ENCODE measurements at regions of chr4 and their contacts with region 1.

Region 1: GRCh38 chr4:158496030-158496741 is 25.5 kb upstream of the RXFP1 start:
- DNase-seq: peak in 1 of 2 donors; percentile 7
- ATAC-seq: no peak
- H3K4me3 ChIP-seq: no peak overlapping the region
- H3K27ac ChIP-seq: no peak overlapping the region
- H3K4me1 ChIP-seq: no peaks in the 10 kb centered on the region
- H3K27me3 ChIP-seq: no peaks in the 10 kb centered on the region
- CTCF ChIP-seq: peak; percentile 41

Region 2: GRCh38 chr4:158282252-158282651 is 213.9 kb before region 1 on chr4:
- intact Hi-C with region 1: no loop called
- DNase-seq: no peak
- ATAC-seq: no peak
- H3K4me3 ChIP-seq: no peak overlapping the region
- H3K27ac ChIP-seq: no peak overlapping the region
- H3K4me1 ChIP-seq: no peaks in the 10 kb centered on the region
- H3K27me3 ChIP-seq: no peaks in the 10 kb centered on the region
- CTCF ChIP-seq: no peak

Region 3: GRCh38 chr4:158624889-158625478 is 128.8 kb after region 1 on chr4:
- intact Hi-C with region 1: loop called in 1 of 2 experiments (anchors 10 kb)
- DNase-seq: no peak
- ATAC-seq: peak; percentile 81 to 93 (median 84)
- H3K4me3 ChIP-seq: peak overlapping the region; percentile 15
- H3K27ac ChIP-seq: peak overlapping the region; percentile 75
- H3K4me1 ChIP-seq: peaks cover 20% of the 10 kb centered on the region
- H3K27me3 ChIP-seq: no peaks in the 10 kb centered on the region
- CTCF ChIP-seq: peak; percentile 76